GM12878 (cell line): ENCODE measurements at regions of chr5 and their contacts with region 1.

Region 1: GRCh38 chr5:91419571-91420537 is 36.7 kb upstream of the ARRDC3 start:
- DNase-seq: no peak
- ATAC-seq: peak; percentile 71
- H3K4me3 ChIP-seq: no peak overlapping the region
- H3K27ac ChIP-seq: no peak overlapping the region
- H3K4me1 ChIP-seq: no peaks in the 10 kb centered on the region
- H3K27me3 ChIP-seq: no peaks in the 10 kb centered on the region
- CTCF ChIP-seq: peak; percentile 29 to 60 (median 51); a peak in 5 of 6 replicates
- EP300 ChIP-seq: no peak
- POLR2A ChIP-seq: no peak
- RAD21 ChIP-seq: peak; percentile 76

Region 2: DNA sequence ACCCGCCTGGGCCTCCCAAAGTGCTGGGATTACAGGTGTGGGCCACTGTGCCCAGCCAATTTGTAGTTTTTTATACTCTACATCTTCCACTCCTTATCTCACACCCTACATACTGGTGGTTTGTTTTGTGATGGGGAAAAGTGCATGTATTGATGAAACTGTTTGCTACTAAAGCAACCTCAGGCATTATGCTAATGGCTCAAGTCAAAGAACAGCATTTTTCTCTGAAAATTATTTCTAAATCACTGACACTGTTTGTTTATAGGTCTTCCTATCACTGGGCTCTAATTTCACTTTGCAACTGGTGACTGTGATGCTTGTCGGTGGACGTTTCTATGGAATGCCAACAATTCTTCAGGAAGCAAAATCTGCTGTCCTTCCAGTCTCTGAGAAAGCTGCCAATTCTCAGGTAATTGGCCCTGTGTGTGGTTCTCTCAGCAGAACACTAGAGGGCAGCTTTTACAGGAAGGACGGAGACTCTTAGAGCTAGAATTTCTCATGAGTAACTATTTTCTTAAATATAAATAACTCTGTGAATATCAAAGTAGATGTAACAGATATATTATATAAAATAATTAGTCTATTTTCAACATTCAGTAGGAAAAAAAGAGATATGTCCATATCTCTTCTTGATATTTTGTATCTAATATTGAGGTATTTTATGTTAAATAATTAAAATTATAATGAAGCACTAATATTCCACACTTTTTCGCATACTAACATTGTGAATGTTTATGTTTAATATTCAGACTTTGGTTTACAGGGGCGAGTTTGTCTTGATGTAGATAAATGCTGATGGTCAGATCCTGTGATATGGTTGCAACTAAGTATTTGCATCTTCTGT is 617.2 kb before region 1 on chr5:
- CTCF ChIA-PET with region 1: interaction called, 13 read pairs
- POLR2A ChIA-PET with region 1: no interaction called
- RAD21 ChIA-PET with region 1: interaction called, 15 read pairs
- SMC1A ChIA-PET with region 1: interaction called, 12 read pairs
- in situ Hi-C with region 1: no loop called
- intact Hi-C with region 1: loop called (anchors 5 kb)
- DNase-seq: no peak
- ATAC-seq: peak; percentile 85
- H3K4me3 ChIP-seq: no peak overlapping the region
- H3K27ac ChIP-seq: no peak overlapping the region
- H3K4me1 ChIP-seq: no peaks in the 10 kb centered on the region
- H3K27me3 ChIP-seq: no peaks in the 10 kb centered on the region
- CTCF ChIP-seq: peak; percentile 62 to 75 (median 74)
- EP300 ChIP-seq: no peak
- POLR2A ChIP-seq: no peak
- RAD21 ChIP-seq: peak; percentile 53

Region 3: GRCh38 chr5:90932052-90932699 is 487.7 kb before region 1 on chr5:
- CTCF ChIA-PET with region 1: interaction called, 66 read pairs
- POLR2A ChIA-PET with region 1: no interaction called
- RAD21 ChIA-PET with region 1: interaction called, 29 read pairs
- SMC1A ChIA-PET with region 1: interaction called, 23 read pairs
- in situ Hi-C with region 1: no loop called
- intact Hi-C with region 1: loop called (anchors 1 kb)
- DNase-seq: peak; percentile 12
- ATAC-seq: peak; percentile 74
- H3K4me3 ChIP-seq: no peak overlapping the region
- H3K27ac ChIP-seq: no peak overlapping the region
- H3K4me1 ChIP-seq: no peaks in the 10 kb centered on the region
- H3K27me3 ChIP-seq: no peaks in the 10 kb centered on the region
- CTCF ChIP-seq: peak; percentile 69 to 74 (median 71)
- EP300 ChIP-seq: no peak
- POLR2A ChIP-seq: no peak
- RAD21 ChIP-seq: peak; percentile 83

Region 4: GRCh38 chr5:91183737-91184136 is 236.1 kb before region 1 on chr5:
- CTCF ChIA-PET with region 1: interaction called, 9 read pairs
- POLR2A ChIA-PET with region 1: no interaction called
- RAD21 ChIA-PET with region 1: interaction called, 10 read pairs
- SMC1A ChIA-PET with region 1: interaction called, 4 read pairs
- in situ Hi-C with region 1: no loop called
- intact Hi-C with region 1: no loop called
- DNase-seq: no peak
- ATAC-seq: no peak
- H3K4me3 ChIP-seq: no peak overlapping the region
- H3K27ac ChIP-seq: no peak overlapping the region
- H3K4me1 ChIP-seq: peaks cover 5% of the 10 kb centered on the region; the same call in 1 of the 2 replicates
- H3K27me3 ChIP-seq: no peaks in the 10 kb centered on the region
- CTCF ChIP-seq: no peak
- EP300 ChIP-seq: no peak
- POLR2A ChIP-seq: no peak
- RAD21 ChIP-seq: no peak

Region 5: DNA sequence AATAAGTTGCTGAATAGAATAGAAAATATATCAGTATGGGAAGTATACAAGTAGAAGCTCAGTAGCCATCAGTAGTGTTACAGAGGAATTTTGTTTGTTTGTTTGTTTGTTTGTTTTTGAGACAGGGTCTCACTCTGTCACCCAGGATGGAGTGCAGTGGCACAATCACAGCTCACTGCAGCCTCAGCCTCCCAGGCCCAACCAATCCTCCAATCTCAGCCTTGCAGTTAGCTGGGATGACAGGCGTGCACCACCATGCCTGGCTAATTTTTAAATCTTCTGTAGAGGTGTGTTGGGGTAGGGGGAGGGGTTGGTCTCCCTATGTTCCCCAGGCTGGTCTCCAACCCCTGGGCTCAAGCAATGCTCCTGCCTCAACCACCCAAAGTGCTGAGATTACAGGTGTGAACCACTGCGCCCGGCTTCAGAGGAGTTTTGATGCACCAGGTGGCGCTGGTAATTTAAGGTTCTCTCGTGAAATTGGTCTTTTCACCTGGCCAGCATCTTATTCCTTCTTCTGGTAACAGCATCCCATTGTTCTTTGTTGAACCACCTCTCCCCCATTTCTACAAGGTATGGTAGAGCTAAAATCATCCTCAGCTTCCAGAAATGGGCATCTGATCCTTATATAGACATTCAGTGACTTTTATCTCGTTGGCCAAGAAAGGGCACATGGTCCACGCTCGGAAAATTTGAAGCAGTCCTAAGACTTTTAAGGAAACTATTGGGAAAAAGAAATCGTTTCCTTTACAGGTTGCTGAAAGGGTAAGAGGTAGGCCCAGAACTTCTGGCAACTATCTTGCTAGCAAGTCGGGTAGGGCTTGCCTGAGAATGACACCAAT is 193.8 kb before region 1 on chr5:
- CTCF ChIA-PET with region 1: interaction called, 27 read pairs
- POLR2A ChIA-PET with region 1: interaction called, 7 read pairs
- RAD21 ChIA-PET with region 1: interaction called, 13 read pairs
- SMC1A ChIA-PET with region 1: interaction called, 27 read pairs
- in situ Hi-C with region 1: no loop called
- intact Hi-C with region 1: no loop called
- DNase-seq: peak; percentile 8
- ATAC-seq: peak; percentile 84
- H3K4me3 ChIP-seq: no peak overlapping the region
- H3K27ac ChIP-seq: no peak overlapping the region
- H3K4me1 ChIP-seq: no peaks in the 10 kb centered on the region
- H3K27me3 ChIP-seq: no peaks in the 10 kb centered on the region; a peak in 1 of 4 replicates
- CTCF ChIP-seq: peak; percentile 53 to 71 (median 58); a peak in 5 of 6 replicates
- EP300 ChIP-seq: no peak
- POLR2A ChIP-seq: no peak
- RAD21 ChIP-seq: peak; percentile 84

Region 6: DNA sequence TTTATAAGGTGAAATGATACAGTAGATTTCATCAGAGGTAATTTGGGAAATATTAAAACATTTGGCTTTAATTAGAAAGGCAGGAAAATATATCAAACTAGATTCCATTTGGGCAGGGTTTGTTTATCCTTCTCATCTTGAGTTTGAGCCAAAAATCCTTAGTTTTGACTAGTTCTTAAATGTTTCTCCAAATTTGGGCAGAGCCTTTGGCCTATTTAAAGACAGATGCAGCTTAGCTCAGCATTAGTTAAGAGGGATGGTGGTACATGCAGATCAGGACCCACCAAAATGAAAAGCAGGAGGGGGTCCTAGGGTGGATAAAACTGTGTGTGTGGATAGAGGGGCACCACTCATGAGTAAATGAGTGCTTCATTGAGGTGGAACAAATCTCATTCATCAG is 16.4 kb before region 1 on chr5:
- CTCF ChIA-PET with region 1: interaction called, 89 read pairs
- POLR2A ChIA-PET with region 1: no interaction called
- RAD21 ChIA-PET with region 1: interaction called, 8 read pairs
- SMC1A ChIA-PET with region 1: interaction called, 16 read pairs
- in situ Hi-C with region 1: no loop called
- intact Hi-C with region 1: no loop called
- DNase-seq: no peak
- ATAC-seq: no peak
- H3K4me3 ChIP-seq: no peak overlapping the region
- H3K27ac ChIP-seq: no peak overlapping the region
- H3K4me1 ChIP-seq: no peaks in the 10 kb centered on the region
- H3K27me3 ChIP-seq: no peaks in the 10 kb centered on the region
- CTCF ChIP-seq: no peak
- EP300 ChIP-seq: no peak
- POLR2A ChIP-seq: no peak
- RAD21 ChIP-seq: no peak

Region 7: GRCh38 chr5:91434348-91434747 is 14.5 kb after region 1 on chr5:
- CTCF ChIA-PET with region 1: interaction called, 15 read pairs
- POLR2A ChIA-PET with region 1: no interaction called
- RAD21 ChIA-PET with region 1: interaction called, 9 read pairs
- SMC1A ChIA-PET with region 1: interaction called, 6 read pairs
- in situ Hi-C with region 1: no loop called
- intact Hi-C with region 1: no loop called
- DNase-seq: no peak
- ATAC-seq: peak; percentile 34; the same call in 1 of the 3 replicates
- H3K4me3 ChIP-seq: no peak overlapping the region
- H3K27ac ChIP-seq: no peak overlapping the region
- H3K4me1 ChIP-seq: no peaks in the 10 kb centered on the region
- H3K27me3 ChIP-seq: no peaks in the 10 kb centered on the region
- CTCF ChIP-seq: no peak
- EP300 ChIP-seq: no peak
- POLR2A ChIP-seq: no peak
- RAD21 ChIP-seq: no peak